PC-9 (cell line): ENCODE measurements at regions of chr16 and their contacts with region 1.

Region 1: DNA sequence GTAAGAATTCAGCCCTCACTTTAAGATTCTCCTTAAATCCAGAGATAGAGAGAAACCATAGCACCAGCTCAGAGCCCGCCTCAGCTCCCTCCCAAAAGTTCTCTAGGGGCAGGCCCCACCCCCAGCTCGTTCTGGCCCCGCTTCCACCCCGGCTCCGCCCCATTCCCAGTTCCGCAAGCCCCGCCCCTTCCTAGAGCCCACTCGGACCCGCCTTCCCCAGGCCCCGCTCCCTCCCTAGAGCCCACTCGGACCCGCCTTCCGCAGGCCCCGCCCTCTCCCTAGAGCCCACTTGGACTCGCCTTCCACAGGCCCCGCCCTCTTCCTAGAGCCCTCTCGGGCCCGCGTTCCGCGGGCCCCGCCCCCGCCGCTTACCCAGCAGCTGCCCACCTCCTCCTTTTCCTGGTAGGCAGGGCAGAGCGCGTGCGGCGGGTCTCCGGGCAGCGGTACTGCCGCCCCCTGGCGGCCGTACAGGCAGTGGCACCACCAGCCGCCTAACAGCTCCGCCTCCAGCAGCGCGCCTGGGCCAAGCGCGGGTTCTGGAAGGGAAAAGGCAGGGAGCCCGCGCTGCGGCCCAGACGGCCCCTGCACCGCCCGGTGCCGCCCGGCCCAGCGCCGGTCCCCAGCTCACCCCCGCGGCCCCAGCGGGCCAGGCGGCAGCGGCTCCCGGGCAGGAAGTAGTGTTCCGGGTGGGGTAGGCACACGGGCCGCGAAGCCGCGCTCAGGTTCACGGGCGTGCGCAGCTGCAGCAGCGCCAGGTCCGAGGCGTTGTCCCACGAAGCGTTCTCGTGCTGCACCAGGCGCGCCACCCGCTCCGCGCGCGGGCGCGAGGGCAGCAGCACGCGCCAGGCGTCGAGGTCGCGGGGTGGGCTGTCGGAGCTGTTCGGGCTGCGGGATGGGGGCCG is 6.8 kb upstream of the PRSS8 start:
- DNase-seq: peak; percentile 95 to 100
- H3K4me3 ChIP-seq: peak overlapping the region; percentile 52
- H3K27ac ChIP-seq: peak overlapping the region; percentile 69
- H3K4me1 ChIP-seq: peaks cover 39% of the 10 kb centered on the region
- H3K27me3 ChIP-seq: no peaks in the 10 kb centered on the region
- CTCF ChIP-seq: peak; percentile 93

Region 2: GRCh38 chr16:30984669-30985400 is 157.5 kb before region 1 on chr16 and contains the start of gene HSD3B7:
- CTCF ChIA-PET with region 1: interaction called, 33 read pairs
- POLR2A ChIA-PET with region 1: interaction called, 34 read pairs
- intact Hi-C with region 1: loop called (anchors 1 kb)
- DNase-seq: peak; percentile 59 to 95
- H3K4me3 ChIP-seq: peak within 1 kb of the TSS; percentile 45; the same call in 1 of the 2 replicates
- H3K27ac ChIP-seq: no peak within 1 kb of the TSS
- H3K4me1 ChIP-seq: no peaks in the 10 kb centered on the region; the same call in 1 of the 2 replicates
- H3K27me3 ChIP-seq: no peaks in the 10 kb centered on the region
- CTCF ChIP-seq: peak; percentile 97
- total RNA-seq, gene HSD3B7: 34.8 and 44.2 TPM in 2 replicates

Region 3: DNA sequence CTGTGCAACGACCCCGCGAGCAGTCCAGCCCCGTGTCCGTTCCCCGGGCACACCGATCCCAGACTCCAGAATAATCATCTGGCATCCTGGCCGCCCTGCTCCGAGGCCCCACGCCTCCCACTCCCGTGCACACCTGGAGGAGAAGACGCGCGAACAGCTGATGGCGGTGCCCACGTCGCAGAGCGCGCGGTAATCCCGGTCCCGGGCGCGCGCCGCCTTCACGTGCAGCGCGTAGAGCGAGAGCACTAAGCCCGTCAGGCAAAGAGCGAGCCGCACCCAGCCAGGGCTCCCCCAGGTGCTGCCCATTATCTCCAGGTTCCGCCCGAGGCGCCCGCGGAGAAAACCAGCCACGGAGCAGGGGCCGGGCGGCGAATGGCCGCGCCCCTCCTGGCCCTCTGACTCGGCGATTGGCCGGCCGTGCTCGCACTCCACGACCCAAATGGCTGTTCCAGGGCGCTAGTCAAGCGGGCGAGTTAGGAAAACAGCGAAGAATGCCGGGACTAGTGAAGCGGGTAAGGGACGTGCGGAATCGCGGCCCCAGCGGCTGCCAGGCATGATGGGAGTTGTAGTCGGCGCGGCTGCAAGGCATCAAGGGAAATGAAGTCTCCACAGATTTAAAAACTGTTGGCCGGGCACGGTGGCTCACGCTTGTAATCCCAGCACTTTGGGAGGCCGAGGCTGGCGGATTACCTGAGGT is 47.8 kb before region 1 on chr16 and contains the start of gene VKORC1:
- CTCF ChIA-PET with region 1: interaction called, 4 read pairs
- POLR2A ChIA-PET with region 1: no interaction called
- intact Hi-C with region 1: loop called (anchors 1 kb)
- DNase-seq: peak; percentile 97 to 99
- H3K4me3 ChIP-seq: peak within 1 kb of the TSS; percentile 71
- H3K27ac ChIP-seq: peak within 1 kb of the TSS; percentile 35
- H3K4me1 ChIP-seq: 0 out of 2 replicates have a peak, but pooled peaks cover 3% of the 10 kb centered on the region
- H3K27me3 ChIP-seq: no peaks in the 10 kb centered on the region
- CTCF ChIP-seq: no peak
- total RNA-seq, gene VKORC1: 46.0 and 59.9 TPM in 2 replicates

Region 4: GRCh38 chr16:31128711-31129567 is 13.4 kb before region 1 on chr16:
- CTCF ChIA-PET with region 1: interaction called, 32 read pairs
- POLR2A ChIA-PET with region 1: interaction called, 15 read pairs
- intact Hi-C with region 1: loop called (anchors 1 kb)
- DNase-seq: peak; percentile 69 to 94
- H3K4me3 ChIP-seq: no peak overlapping the region
- H3K27ac ChIP-seq: peak overlapping the region; percentile 91
- H3K4me1 ChIP-seq: peaks cover 56% of the 10 kb centered on the region
- H3K27me3 ChIP-seq: no peaks in the 10 kb centered on the region
- CTCF ChIP-seq: no peak

Region 5: GRCh38 chr16:31333686-31334649 is 191.6 kb after region 1 on chr16:
- CTCF ChIA-PET with region 1: interaction called, 20 read pairs
- POLR2A ChIA-PET with region 1: no interaction called
- intact Hi-C with region 1: no loop called
- DNase-seq: peak; percentile 57 to 60
- H3K4me3 ChIP-seq: no peak overlapping the region
- H3K27ac ChIP-seq: no peak overlapping the region
- H3K4me1 ChIP-seq: no peaks in the 10 kb centered on the region
- H3K27me3 ChIP-seq: peaks cover 47% of the 10 kb centered on the region
- CTCF ChIP-seq: peak; percentile 70

Region 6: GRCh38 chr16:31362476-31363405 is 220.4 kb after region 1 on chr16:
- CTCF ChIA-PET with region 1: no interaction called
- POLR2A ChIA-PET with region 1: no interaction called
- intact Hi-C with region 1: no loop called
- DNase-seq: no peak
- H3K4me3 ChIP-seq: no peak overlapping the region
- H3K27ac ChIP-seq: no peak overlapping the region
- H3K4me1 ChIP-seq: no peaks in the 10 kb centered on the region
- H3K27me3 ChIP-seq: peaks cover 17% of the 10 kb centered on the region; the same call in 1 of the 2 replicates
- CTCF ChIP-seq: no peak

Region 7: GRCh38 chr16:31487720-31488467 is 345.5 kb after region 1 on chr16:
- CTCF ChIA-PET with region 1: interaction called, 16 read pairs
- POLR2A ChIA-PET with region 1: no interaction called
- intact Hi-C with region 1: no loop called
- DNase-seq: peak in 1 of 2 experiments; percentile 82
- H3K4me3 ChIP-seq: peak overlapping the region; percentile 53; the same call in 1 of the 2 replicates
- H3K27ac ChIP-seq: no peak overlapping the region
- H3K4me1 ChIP-seq: 0 out of 2 replicates have a peak, but pooled peaks cover 8% of the 10 kb centered on the region
- H3K27me3 ChIP-seq: no peaks in the 10 kb centered on the region
- CTCF ChIP-seq: no peak